ENCODE measurements at regions of chr10 and their contacts with region 1.

Region 1: GRCh38 chr10:8532647-8533046 is 478.2 kb downstream of the GATA3 start:
- DNase-seq: no peak
- ATAC-seq: no peak
- H3K4me3 ChIP-seq: no peak overlapping the region
- H3K27ac ChIP-seq: no peak overlapping the region
- H3K4me1 ChIP-seq: no peaks in the 10 kb centered on the region
- H3K27me3 ChIP-seq: no peaks in the 10 kb centered on the region
- CTCF ChIP-seq: no peak
- POLR2A ChIP-seq: no peak
- RAD21 ChIP-seq: no peak

Region 2: GRCh38 chr10:8511026-8511425 is 21.6 kb before region 1 on chr10:
- CTCF ChIA-PET with region 1: no interaction called
- POLR2A ChIA-PET with region 1: no interaction called
- RAD21 ChIA-PET with region 1: no interaction called
- intact Hi-C with region 1: loop called (anchors 1 kb)
- DNase-seq: no peak
- ATAC-seq: no peak
- H3K4me3 ChIP-seq: no peak overlapping the region
- H3K27ac ChIP-seq: no peak overlapping the region
- H3K4me1 ChIP-seq: no peaks in the 10 kb centered on the region
- H3K27me3 ChIP-seq: no peaks in the 10 kb centered on the region
- CTCF ChIP-seq: no peak
- POLR2A ChIP-seq: no peak
- RAD21 ChIP-seq: no peak

Measured in HCT116 (cell line).